HEK293 (cell line): ENCODE measurements at regions of chr18 and their contacts with region 1.

Region 1: DNA sequence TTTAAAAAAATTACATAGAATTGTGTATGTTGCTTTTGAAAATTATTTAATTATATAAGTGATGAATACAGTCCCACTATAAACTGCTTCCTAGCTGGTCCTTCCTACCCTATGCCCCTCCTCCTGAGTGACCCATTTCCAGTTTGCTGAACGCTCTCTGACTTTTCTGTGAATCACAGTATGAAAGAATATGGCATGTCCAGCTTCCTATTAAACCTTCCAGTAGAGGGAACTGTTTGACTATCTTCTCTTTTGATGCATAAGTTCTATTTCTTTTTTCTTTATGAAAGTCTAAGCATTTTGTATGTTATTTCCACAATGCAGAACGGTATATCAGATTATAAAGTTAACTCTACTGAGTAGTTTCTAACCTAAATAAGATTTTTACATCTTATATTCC is 41.3 kb downstream of the PSMG2 start:
- H3K4me3 ChIP-seq: no peak overlapping the region
- H3K27ac ChIP-seq: no peak overlapping the region
- H3K4me1 ChIP-seq: peaks cover 6% of the 10 kb centered on the region; the same call in 1 of the 2 replicates
- CTCF ChIP-seq: peak; percentile 39; the same call in 1 of the 2 replicates

Region 2: DNA sequence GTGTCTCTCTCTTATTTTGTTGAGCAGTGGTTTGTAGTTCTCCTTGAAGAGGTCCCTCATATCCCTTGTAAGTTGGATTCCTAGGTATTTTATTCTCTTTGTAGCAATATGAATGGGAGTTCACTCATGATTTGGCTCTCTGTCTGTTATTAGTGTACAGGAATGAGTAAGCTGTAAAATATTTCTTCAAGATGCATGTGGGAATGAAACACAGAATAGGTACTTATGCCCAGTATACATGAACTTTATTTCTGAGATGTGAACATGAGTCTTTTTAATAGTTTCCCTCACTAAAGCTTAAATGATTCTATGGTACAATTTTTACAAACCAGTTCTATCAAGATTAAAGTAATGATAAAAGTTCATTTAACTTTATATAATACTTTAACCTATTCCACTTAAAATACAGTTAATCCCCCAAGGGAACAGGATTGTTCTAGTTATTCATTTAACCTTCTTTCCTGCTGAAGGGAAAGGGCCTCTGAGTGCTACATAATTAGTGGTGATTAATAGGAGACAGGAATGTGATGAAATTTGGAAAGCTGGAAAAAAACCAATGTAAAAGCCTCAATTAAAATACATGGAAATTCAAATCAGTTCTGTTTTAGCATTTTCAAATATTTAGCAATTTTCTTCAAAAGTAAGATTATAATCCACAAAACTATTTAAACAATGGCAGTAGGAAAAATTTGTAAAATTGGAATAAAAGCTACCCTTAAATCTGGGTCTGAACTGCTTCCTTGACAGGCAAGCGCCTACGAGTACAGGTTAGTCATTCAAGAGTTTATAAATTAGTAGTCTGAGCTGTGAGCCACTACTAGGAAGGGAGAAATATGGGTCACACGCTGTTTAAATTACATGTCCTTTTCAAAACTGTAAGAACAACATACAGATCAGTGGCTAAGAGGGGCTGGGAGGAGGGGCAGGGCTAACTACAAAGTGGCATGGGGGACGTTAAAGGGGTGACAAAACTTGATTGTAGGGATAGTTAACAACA is 115.1 kb before region 1 on chr18:
- CTCF ChIA-PET with region 1: no interaction called
- POLR2A ChIA-PET with region 1: no interaction called
- H3K4me3 ChIP-seq: no peak overlapping the region
- H3K27ac ChIP-seq: no peak overlapping the region
- H3K4me1 ChIP-seq: peaks cover 6% of the 10 kb centered on the region
- CTCF ChIP-seq: no peak

Region 3: DNA sequence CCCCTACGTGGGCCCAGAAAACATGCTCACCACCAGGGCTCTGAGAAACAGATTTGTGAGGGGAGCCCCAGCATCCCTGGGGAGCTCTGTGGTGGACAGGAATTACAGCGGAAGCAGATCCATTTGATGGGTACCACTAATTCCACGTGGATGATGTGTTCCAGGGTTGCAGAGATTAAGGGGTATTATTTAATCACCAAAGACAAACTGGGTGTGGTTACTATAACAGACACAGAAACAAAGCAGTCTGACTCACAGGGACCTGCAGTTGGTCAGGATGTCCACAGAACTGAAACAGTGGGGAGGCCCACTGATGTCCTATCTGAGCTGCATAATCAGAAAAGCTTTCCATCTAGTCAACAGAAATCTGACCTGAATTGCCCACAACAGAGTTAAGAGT is 24.5 kb after region 1 on chr18:
- CTCF ChIA-PET with region 1: no interaction called
- POLR2A ChIA-PET with region 1: no interaction called
- H3K4me3 ChIP-seq: no peak overlapping the region
- H3K27ac ChIP-seq: no peak overlapping the region
- H3K4me1 ChIP-seq: no peaks in the 10 kb centered on the region
- CTCF ChIP-seq: no peak

Region 4: DNA sequence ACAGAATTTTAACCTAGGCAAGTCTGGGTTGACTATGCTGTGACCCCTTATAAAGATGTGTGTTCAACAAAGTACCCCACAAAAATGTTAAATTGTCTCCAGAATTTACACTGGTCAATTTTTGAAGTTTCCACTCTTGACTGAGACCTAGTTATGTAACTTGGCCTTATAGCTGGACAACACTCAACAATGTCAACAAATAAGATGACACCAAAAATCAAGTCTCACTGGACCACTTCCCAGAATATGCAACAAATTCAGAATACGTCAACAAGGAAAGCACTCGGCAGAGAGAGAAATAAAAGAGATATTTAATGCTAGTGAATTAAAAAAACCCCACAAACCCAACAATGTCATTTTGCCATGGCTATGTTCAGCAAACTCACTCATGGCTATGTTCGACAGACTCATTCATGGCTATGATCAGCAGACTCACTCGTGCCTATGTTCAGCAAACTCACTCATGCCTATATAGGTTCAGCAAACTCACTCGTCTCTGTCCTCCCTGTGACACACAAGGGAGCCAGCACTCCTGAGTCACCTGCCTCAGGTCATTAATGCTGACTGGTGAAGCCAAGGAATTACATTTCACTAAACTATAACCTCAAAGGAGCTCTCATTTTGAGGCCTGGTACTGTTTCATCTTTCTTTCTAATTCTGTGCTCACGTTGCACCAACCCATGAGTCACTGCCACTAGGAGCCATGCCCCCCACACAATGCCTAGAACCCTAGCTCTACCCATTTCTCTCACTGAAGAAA is 67.3 kb after region 1 on chr18:
- CTCF ChIA-PET with region 1: no interaction called
- POLR2A ChIA-PET with region 1: no interaction called
- H3K4me3 ChIP-seq: no peak overlapping the region
- H3K27ac ChIP-seq: no peak overlapping the region
- H3K4me1 ChIP-seq: no peaks in the 10 kb centered on the region
- CTCF ChIP-seq: no peak

Region 5: GRCh38 chr18:12921178-12921577 is 177.1 kb after region 1 on chr18:
- CTCF ChIA-PET with region 1: interaction called, 11 read pairs
- POLR2A ChIA-PET with region 1: no interaction called
- H3K4me3 ChIP-seq: no peak overlapping the region
- H3K27ac ChIP-seq: no peak overlapping the region
- H3K4me1 ChIP-seq: no peaks in the 10 kb centered on the region
- CTCF ChIP-seq: no peak